ENCODE measurements at regions of chr4 and their contacts with region 1.

Region 1: DNA sequence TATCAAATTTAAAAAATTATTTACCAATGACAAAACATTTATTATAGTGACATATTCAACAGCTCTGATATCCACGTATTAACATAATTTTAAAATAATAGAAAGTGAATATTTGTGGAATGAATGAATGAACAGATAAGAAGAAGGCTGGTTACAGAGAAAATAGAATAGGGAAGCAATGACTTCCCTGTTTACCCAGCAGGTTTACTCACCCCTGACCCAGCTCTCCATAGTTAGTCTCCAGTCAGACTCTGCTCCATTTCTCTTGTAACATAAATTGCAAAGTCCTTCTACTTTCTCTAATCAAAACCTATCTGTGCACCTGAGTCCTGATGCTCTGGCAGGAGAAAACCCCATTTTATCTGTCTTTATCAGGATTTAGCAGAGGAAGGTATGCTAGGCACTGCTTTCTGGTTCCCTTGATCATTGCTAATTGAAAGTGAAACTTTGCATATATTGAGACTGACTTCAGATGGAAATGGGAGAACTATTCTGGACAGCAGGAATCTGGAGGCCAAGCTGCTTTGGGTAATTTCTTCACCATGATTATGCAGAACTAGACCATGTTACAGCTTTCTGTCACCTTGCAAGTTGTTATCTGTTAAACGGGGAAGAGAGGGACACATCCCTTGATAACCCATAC is 363.0 kb downstream of the FAT4 start:
- DNase-seq: no peak
- H3K4me3 ChIP-seq: no peak overlapping the region
- H3K27ac ChIP-seq: no peak overlapping the region
- H3K4me1 ChIP-seq: no peaks in the 10 kb centered on the region
- H3K27me3 ChIP-seq: no peaks in the 10 kb centered on the region
- CTCF ChIP-seq: no peak
- EP300 ChIP-seq: no peak
- POLR2A ChIP-seq: no peak

Region 2: DNA sequence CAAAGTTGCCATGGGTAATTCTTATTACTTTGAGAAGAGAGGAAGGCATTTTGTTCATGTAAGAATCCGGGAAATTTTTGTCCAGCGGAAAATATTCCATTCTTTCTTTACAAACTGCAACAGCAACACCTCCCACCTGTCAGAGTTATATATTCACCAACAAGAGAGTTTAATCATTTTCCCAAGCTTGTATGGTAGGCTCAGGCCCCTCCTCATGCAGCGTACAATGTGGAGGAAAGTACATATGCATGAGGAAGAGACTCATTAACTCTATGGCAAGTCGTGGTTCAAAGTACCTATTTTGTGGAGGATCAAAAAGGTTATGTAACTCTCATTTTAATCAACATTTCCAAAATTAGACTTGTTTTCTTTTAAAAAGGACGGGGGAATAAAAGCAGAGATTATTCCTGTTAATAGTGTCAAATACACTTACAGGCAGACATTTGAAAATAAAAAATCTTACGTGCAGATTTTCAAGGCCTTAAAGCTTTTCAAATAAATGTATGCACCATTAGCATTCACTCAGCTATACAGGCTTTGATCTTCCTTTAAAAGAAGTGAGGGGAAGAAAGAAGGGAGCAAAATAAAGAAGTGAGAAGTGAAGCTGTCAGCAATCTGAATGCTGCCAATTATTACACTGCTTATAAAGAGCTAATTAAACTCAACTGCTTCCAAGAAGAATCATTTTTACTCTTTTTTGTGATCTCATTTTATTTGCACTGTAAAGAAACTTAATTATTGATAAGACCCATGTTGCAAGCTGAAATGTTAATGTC is 158.2 kb before region 1 on chr4:
- intact Hi-C with region 1: loop called in 1 of 4 experiments (anchors 5 kb)
- DNase-seq: no peak
- H3K4me3 ChIP-seq: no peak overlapping the region
- H3K27ac ChIP-seq: no peak overlapping the region
- H3K4me1 ChIP-seq: no peaks in the 10 kb centered on the region
- H3K27me3 ChIP-seq: no peaks in the 10 kb centered on the region
- CTCF ChIP-seq: no peak
- EP300 ChIP-seq: no peak
- POLR2A ChIP-seq: no peak

Region 3: DNA sequence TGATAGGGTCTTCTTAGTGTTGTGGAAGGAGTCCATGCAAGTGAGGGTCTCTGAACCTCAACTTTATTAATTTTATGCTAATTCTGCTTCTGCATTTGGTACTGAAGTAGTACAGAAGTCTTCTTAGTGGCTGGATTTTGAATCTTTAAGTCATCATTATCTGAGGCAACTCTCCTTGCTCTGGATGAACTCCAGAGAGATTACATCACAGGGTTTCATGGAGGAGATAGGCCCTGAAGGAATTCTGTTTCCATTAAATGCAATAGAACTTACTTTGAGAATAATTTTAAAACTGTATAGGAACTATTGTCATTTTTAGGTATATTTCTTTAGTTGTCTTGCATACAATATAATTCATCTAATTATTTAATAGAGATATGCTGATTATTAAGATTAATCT is 88.2 kb after region 1 on chr4:
- intact Hi-C with region 1: no loop called
- DNase-seq: no peak
- H3K4me3 ChIP-seq: no peak overlapping the region
- H3K27ac ChIP-seq: no peak overlapping the region
- H3K4me1 ChIP-seq: no peaks in the 10 kb centered on the region
- H3K27me3 ChIP-seq: no peaks in the 10 kb centered on the region
- CTCF ChIP-seq: no peak
- EP300 ChIP-seq: no peak
- POLR2A ChIP-seq: no peak

Region 4: GRCh38 chr4:126012691-126013290 is 335.0 kb after region 1 on chr4:
- intact Hi-C with region 1: no loop called
- DNase-seq: no peak
- H3K4me3 ChIP-seq: no peak overlapping the region
- H3K27ac ChIP-seq: no peak overlapping the region
- H3K4me1 ChIP-seq: no peaks in the 10 kb centered on the region
- H3K27me3 ChIP-seq: no peaks in the 10 kb centered on the region
- CTCF ChIP-seq: no peak
- EP300 ChIP-seq: no peak
- POLR2A ChIP-seq: no peak

Measured in ovary (tissue), 10 donors.